ENCODE measurements at regions of chr14 and their contacts with region 1.

Region 1: GRCh38 chr14:101865288-101865687 is 99.1 kb upstream of the DYNC1H1 start:
- DNase-seq: no peak
- CTCF ChIP-seq: no peak

Region 2: DNA sequence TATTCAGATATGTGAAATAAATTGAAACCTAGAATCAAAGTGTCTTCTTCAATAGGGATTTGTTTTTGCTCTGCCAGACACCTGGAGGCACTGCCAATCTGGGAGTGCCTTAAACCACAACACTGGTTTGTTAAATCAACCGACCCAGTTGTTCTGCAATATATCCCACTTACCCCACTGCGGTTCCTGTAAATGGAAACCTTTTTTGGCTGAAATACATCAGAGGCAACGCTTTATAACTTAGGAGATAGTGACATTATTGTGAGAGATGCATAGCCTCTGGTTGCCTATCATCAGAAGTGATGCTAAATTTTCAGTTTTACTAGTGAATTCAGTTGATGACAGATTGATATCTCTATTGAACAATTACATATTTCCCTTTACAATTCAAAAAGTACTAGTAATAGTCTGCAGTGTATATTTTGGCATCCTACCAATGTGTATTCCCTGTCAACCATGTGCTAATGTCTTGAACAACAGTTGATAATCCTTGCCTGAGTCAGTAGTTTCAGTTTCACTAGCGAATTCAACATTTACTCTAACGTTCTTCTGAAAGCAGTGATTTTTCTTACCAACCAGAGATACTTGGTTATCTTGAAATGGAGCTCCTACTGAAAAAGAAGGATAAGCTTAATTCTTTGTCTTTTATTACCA is 73.2 kb before region 1 on chr14:
- CTCF ChIA-PET with region 1: no interaction called
- POLR2A ChIA-PET with region 1: no interaction called
- DNase-seq: peak; percentile 40
- CTCF ChIP-seq: no peak

Region 3: GRCh38 chr14:101854366-101854765 is 10.9 kb before region 1 on chr14:
- CTCF ChIA-PET with region 1: interaction called, 11 read pairs
- POLR2A ChIA-PET with region 1: no interaction called
- DNase-seq: no peak
- CTCF ChIP-seq: no peak

Region 4: DNA sequence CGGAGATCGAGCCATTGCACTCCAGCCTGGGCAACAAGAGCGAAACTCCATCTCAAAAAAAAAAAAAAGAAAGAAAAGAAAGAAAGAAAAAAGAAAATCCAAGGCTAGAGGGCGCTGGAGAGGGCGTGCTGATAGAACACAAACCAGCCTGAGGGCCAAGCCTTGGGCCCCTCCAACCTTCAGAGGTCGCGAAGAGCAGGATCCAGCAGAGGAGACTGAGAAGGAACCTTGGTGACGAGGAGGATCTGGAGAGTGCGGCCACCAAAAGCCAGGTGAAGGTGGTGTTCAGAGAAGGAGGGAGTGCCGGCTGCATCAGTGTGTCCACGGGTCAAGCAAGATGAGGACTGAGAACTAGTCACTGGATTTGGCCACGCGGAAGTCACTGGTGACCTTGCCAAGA is 94.9 kb after region 1 on chr14:
- CTCF ChIA-PET with region 1: no interaction called
- POLR2A ChIA-PET with region 1: no interaction called
- DNase-seq: no peak
- CTCF ChIP-seq: peak; percentile 24